CD4-positive, alpha-beta memory T cell (primary cell): ENCODE measurements at regions of chr6 and their contacts with region 1.

Region 1: GRCh38 chr6:33276864-33277662 is at the start of gene B3GALT4:
- DNase-seq: peak; percentile 66 to 77 (median 75)
- H3K4me3 ChIP-seq: peak within 1 kb of the TSS; percentile 72 to 79
- H3K4me3 Mint-ChIP-seq: peak within 1 kb of the TSS; percentile 89 to 93 (median 91)
- H3K27ac ChIP-seq: peak within 1 kb of the TSS; percentile 82
- H3K27ac Mint-ChIP-seq: peak within 1 kb of the TSS; percentile 90 to 97 (median 94)
- H3K4me1 ChIP-seq: peaks cover 71% of the 10 kb centered on the region
- H3K4me1 Mint-ChIP-seq: peaks cover 35 to 87% (median 59%) of the 10 kb centered on the region in 4 donors
- H3K27me3 ChIP-seq: no peaks in the 10 kb centered on the region
- H3K27me3 Mint-ChIP-seq: no peaks in the 10 kb centered on the region
- total RNA-seq, gene B3GALT4: 43.3 to 46.7 TPM

Region 2: DNA sequence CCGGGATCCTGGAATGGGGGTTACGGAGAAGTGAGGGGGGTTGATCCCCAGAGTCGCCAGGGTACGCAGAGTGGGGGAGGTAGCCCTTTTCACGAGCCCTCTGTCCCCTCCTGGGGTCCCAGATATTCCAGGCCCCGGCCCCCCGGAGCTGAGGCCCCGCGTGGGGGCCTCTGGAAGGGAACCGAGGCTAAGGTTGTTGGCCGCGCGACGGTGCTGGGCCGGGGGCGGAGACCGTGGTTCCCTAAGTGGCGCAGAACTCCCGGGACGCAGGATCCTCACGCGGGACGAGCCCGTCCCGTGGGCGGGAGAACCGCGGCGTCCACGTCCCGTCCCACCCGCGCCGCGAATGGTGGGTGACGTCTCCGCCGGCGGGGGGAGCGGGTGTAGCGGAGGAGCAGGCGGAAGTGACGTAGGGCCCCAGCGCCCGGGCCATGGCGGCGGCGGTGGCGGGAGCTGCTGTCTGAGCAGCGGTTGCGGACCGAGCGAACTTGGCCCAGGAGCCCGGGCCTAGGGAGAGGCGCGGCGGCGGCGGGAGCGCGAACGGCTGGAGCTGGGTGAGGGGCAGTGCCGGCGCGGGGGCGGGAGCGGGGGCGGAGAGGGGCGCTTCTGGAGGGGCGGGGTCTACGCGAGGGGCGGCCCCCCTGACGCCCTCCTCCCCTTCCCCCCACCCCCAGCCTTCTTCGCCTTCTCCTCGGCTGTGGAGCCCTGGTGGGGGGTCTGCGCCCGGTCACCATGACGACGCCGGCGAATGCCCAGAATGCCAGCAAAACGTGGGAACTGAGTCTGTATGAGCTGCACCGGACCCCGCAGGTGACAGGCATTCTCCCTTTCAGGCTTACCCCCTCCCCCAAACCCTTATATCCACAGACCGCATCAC is 68.7 kb before region 1 on chr6 and contains the start of gene RING1:
- CTCF ChIA-PET with region 1: no interaction called
- POLR2A ChIA-PET with region 1: interaction called, 21 read pairs
- intact Hi-C with region 1: no loop called
- DNase-seq: peak; percentile 87 to 90 (median 87)
- H3K4me3 ChIP-seq: peak within 1 kb of the TSS; percentile 75 to 78
- H3K4me3 Mint-ChIP-seq: peak within 1 kb of the TSS; percentile 88 to 97 (median 92)
- H3K27ac ChIP-seq: peak within 1 kb of the TSS; percentile 85
- H3K27ac Mint-ChIP-seq: peak within 1 kb of the TSS; percentile 88 to 96 (median 95)
- H3K4me1 ChIP-seq: peaks cover 44% of the 10 kb centered on the region
- H3K4me1 Mint-ChIP-seq: peaks cover 32 to 61% (median 43%) of the 10 kb centered on the region in 4 donors
- H3K27me3 ChIP-seq: no peaks in the 10 kb centered on the region
- H3K27me3 Mint-ChIP-seq: peaks cover 3 to 12% of the 10 kb centered on the region in 2 donors
- total RNA-seq, gene RING1: 36.8 to 38.4 TPM

Region 3: GRCh38 chr6:33288921-33289748 is 12.1 kb after region 1 on chr6 and contains the starts of genes PFDN6 and WDR46:
- CTCF ChIA-PET with region 1: interaction called, 17 read pairs
- POLR2A ChIA-PET with region 1: interaction called, 220 read pairs
- intact Hi-C with region 1: loop called (anchors 1 kb)
- DNase-seq: peak; percentile 87 to 92 (median 89)
- H3K4me3 ChIP-seq: peak within 1 kb of the TSS; percentile 73 to 84
- H3K4me3 Mint-ChIP-seq: peak within 1 kb of the TSS; percentile 96 to 100 (median 98)
- H3K27ac ChIP-seq: peak within 1 kb of the TSS; percentile 71
- H3K27ac Mint-ChIP-seq: peak within 1 kb of the TSS; percentile 79 to 98 (median 95)
- H3K4me1 ChIP-seq: peaks cover 30% of the 10 kb centered on the region
- H3K4me1 Mint-ChIP-seq: peaks cover 24 to 48% (median 36%) of the 10 kb centered on the region in 4 donors
- H3K27me3 ChIP-seq: no peaks in the 10 kb centered on the region
- H3K27me3 Mint-ChIP-seq: no peaks in the 10 kb centered on the region
- total RNA-seq, gene PFDN6: 43.6 to 45.5 TPM
- total RNA-seq, gene WDR46: 60.8 to 66.1 TPM

Region 4: GRCh38 chr6:33299237-33299944 is 22.3 kb after region 1 on chr6:
- CTCF ChIA-PET with region 1: interaction called, 12 read pairs
- POLR2A ChIA-PET with region 1: interaction called, 220 read pairs
- intact Hi-C with region 1: loop called (anchors 1 kb)
- DNase-seq: peak; percentile 91 to 94 (median 93)
- H3K4me3 ChIP-seq: peak overlapping the region; percentile 71 to 97
- H3K4me3 Mint-ChIP-seq: peak overlapping the region; percentile 99
- H3K27ac ChIP-seq: peak overlapping the region; percentile 94
- H3K27ac Mint-ChIP-seq: peak overlapping the region; percentile 96 to 100 (median 99)
- H3K4me1 ChIP-seq: peaks cover 27% of the 10 kb centered on the region
- H3K4me1 Mint-ChIP-seq: peaks cover 22 to 42% (median 31%) of the 10 kb centered on the region in 4 donors
- H3K27me3 ChIP-seq: no peaks in the 10 kb centered on the region
- H3K27me3 Mint-ChIP-seq: peaks cover 0 to 4% of the 10 kb centered on the region in 2 donors

Region 5: GRCh38 chr6:33317669-33318425 is 40.8 kb after region 1 on chr6 and contains the start of gene ZBTB22:
- CTCF ChIA-PET with region 1: interaction called, 10 read pairs
- POLR2A ChIA-PET with region 1: interaction called, 40 read pairs
- intact Hi-C with region 1: loop called (anchors 1 kb)
- DNase-seq: peak; percentile 96 to 99 (median 97)
- H3K4me3 ChIP-seq: peak within 1 kb of the TSS; percentile 73 to 100
- H3K4me3 Mint-ChIP-seq: peak within 1 kb of the TSS; percentile 98 to 100 (median 99)
- H3K27ac ChIP-seq: peak within 1 kb of the TSS; percentile 83
- H3K27ac Mint-ChIP-seq: peak within 1 kb of the TSS; percentile 98 to 99 (median 98)
- H3K4me1 ChIP-seq: peaks cover 73% of the 10 kb centered on the region
- H3K4me1 Mint-ChIP-seq: peaks cover 40 to 100% (median 62%) of the 10 kb centered on the region in 4 donors
- H3K27me3 ChIP-seq: no peaks in the 10 kb centered on the region
- H3K27me3 Mint-ChIP-seq: no peaks in the 10 kb centered on the region
- total RNA-seq, gene ZBTB22: 28.6 to 28.7 TPM

Region 6: DNA sequence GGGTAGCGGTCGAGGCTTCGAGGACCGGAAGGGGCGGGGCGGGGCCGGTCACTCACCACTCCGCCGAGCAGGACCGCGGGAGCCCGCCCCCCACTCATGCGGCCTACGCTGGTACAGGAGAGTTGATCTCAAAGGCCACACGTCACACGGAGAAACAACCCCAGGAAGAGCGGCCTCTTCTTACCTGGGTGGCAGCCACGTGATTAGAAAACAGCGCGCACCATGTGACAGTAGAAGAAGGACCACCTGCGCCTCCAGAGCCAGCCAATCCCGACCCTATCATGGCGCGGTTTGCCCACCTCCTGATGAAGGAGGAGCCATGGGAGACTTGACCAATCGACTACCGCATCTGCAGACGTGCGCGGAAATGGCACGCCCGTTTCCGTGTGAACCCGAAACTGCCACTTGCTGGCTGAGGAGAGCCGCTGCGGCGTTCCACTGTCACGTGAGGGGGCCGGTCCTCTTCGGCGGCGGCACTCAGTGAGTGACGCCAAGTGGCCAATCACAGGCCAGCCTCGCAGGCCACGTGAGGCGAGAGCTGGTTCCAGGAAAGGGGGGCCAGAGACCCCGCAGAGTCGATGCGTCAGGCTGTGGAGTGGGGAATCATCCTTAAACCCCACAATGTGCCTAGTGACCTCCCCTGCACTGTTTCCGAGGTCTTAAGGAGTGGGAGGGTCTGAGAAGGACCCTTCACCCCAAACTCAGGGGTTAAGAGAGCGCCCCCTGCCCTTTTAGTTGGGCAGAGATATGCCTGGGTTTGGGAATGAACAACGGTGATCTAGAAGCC is 141.0 kb after region 1 on chr6 and contains the start of gene CUTA:
- CTCF ChIA-PET with region 1: no interaction called
- POLR2A ChIA-PET with region 1: interaction called, 26 read pairs
- intact Hi-C with region 1: loop called (anchors 5 kb)
- DNase-seq: peak; percentile 97 to 100 (median 100)
- H3K4me3 ChIP-seq: peak within 1 kb of the TSS; percentile 82 to 94
- H3K4me3 Mint-ChIP-seq: peak within 1 kb of the TSS; percentile 87 to 97 (median 94)
- H3K27ac ChIP-seq: peak within 1 kb of the TSS; percentile 97
- H3K27ac Mint-ChIP-seq: peak within 1 kb of the TSS; percentile 99 to 100 (median 99)
- H3K4me1 ChIP-seq: peaks cover 72% of the 10 kb centered on the region
- H3K4me1 Mint-ChIP-seq: peaks cover 43 to 87% (median 61%) of the 10 kb centered on the region in 4 donors
- H3K27me3 ChIP-seq: no peaks in the 10 kb centered on the region
- H3K27me3 Mint-ChIP-seq: no peaks in the 10 kb centered on the region
- total RNA-seq, gene CUTA: 210 to 217 TPM

Region 7: DNA sequence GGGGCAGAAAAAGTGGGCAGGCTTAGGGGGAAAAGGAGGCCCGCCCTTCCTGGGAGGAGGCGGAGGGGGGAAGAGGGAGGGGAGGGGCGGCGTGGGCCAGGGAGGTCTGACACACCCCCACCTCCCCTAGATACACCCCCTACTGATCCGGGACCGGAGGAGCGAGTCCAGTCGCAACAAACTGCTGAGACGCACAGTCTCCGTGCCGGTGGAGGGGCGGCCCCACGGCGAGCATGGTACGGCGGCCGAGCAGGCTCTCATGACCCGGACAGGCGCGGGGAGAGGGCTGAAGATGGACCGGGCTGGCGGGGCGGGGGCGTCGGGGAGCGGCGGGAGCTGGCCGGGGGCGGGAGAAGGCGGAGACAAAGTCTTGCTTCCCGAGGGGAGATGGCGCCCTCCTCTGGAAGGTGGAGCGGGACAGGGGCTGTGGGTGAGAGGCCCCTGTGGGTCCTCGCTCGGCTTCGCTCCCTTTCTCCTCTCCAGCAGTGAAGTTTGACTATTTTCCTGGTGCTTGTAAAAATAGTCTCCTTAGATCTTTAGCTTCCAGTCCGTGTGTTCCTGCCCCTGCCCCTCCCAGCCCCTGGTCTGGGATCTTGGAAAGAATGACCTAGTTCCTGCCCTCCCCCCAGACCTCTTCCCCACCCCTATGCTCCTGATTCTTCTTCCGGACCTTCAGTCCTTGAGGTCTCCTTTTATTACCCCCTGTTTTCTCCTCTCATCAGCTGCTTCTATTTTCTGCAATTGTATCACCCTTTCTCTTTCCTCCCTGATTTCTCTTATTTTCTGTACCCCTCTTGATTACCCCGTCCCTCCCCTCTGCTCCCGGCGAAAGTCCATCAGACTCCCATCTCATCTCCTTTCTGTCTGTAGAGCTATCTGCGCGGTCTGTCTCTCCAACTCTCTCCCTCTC is 148.9 kb after region 1 on chr6:
- CTCF ChIA-PET with region 1: interaction called, 4 read pairs
- POLR2A ChIA-PET with region 1: interaction called, 24 read pairs
- intact Hi-C with region 1: no loop called
- DNase-seq: peak; percentile 80 to 87 (median 80)
- H3K4me3 ChIP-seq: peak overlapping the region; percentile 59 to 63
- H3K4me3 Mint-ChIP-seq: peak overlapping the region; percentile 84 to 99 (median 94)
- H3K27ac ChIP-seq: peak overlapping the region; percentile 90
- H3K27ac Mint-ChIP-seq: peak overlapping the region; percentile 96 to 100 (median 98)
- H3K4me1 ChIP-seq: peaks cover 61% of the 10 kb centered on the region
- H3K4me1 Mint-ChIP-seq: peaks cover 62 to 96% (median 68%) of the 10 kb centered on the region in 4 donors
- H3K27me3 ChIP-seq: no peaks in the 10 kb centered on the region
- H3K27me3 Mint-ChIP-seq: no peaks in the 10 kb centered on the region